Psoas muscle (tissue), 8 donors: ENCODE measurements at regions of chr11 and their contacts with region 1.

Region 1: GRCh38 chr11:102007567-102008437 is 39.4 kb upstream of the CFAP300 start:
- DNase-seq: no peak
- ATAC-seq: peak; percentile 37 to 83 (median 62)
- H3K4me3 ChIP-seq: no peak overlapping the region
- H3K27ac ChIP-seq: no peak overlapping the region
- H3K4me1 ChIP-seq: peaks cover 10% of the 10 kb centered on the region
- H3K27me3 ChIP-seq: no peaks in the 10 kb centered on the region
- CTCF ChIP-seq: peak; percentile 63

Region 2: DNA sequence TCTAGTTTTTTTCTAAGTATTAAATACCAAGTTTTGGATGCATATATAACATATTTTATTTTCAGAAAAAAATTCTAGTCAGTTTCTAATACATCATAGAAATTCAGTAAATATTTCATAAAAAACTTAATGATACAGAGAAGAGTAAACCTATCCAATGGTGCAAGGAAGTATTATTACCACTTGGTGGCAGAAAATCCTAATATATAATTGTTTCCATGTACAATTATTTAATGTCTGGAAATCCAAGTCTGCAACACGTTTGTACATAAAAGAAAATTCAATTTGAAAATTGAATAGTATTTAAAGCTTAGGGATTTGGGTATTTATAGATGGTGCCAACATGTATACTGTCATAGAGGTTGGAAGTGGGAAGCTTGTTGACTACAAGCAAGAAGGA is 551.0 kb before region 1 on chr11:
- intact Hi-C with region 1: loop called in 1 of 2 experiments (anchors 10 kb)
- DNase-seq: no peak
- ATAC-seq: no peak
- H3K4me3 ChIP-seq: no peak overlapping the region
- H3K27ac ChIP-seq: no peak overlapping the region
- H3K4me1 ChIP-seq: no peaks in the 10 kb centered on the region
- H3K27me3 ChIP-seq: no peaks in the 10 kb centered on the region
- CTCF ChIP-seq: peak; percentile 26

Region 3: GRCh38 chr11:101860696-101861427 is 146.9 kb before region 1 on chr11:
- intact Hi-C with region 1: loop called (anchors 2 kb)
- DNase-seq: no peak
- ATAC-seq: peak; percentile 62 to 79 (median 74)
- H3K4me3 ChIP-seq: no peak overlapping the region
- H3K27ac ChIP-seq: no peak overlapping the region
- H3K4me1 ChIP-seq: no peaks in the 10 kb centered on the region
- H3K27me3 ChIP-seq: no peaks in the 10 kb centered on the region
- CTCF ChIP-seq: peak; percentile 70

Region 4: GRCh38 chr11:101914738-101915426 is 92.9 kb before region 1 on chr11 and contains the start of gene CEP126:
- intact Hi-C with region 1: loop called in 1 of 2 experiments (anchors 10 kb)
- DNase-seq: peak; percentile 94 to 96
- ATAC-seq: peak; percentile 94 to 99 (median 98)
- H3K4me3 ChIP-seq: peak within 1 kb of the TSS; percentile 83
- H3K27ac ChIP-seq: peak within 1 kb of the TSS; percentile 67
- H3K4me1 ChIP-seq: peaks cover 10% of the 10 kb centered on the region
- H3K27me3 ChIP-seq: no peaks in the 10 kb centered on the region
- CTCF ChIP-seq: peak; percentile 23
- total RNA-seq, gene CEP126: 0.46 to 1.2 (median 0.52) TPM

Region 5: GRCh38 chr11:102306048-102306585 is 298.3 kb after region 1 on chr11:
- intact Hi-C with region 1: no loop called
- DNase-seq: no peak
- ATAC-seq: no peak
- H3K4me3 ChIP-seq: no peak overlapping the region
- H3K27ac ChIP-seq: no peak overlapping the region
- H3K4me1 ChIP-seq: no peaks in the 10 kb centered on the region
- H3K27me3 ChIP-seq: peaks cover 0 to 3% (median 0%) of the 10 kb centered on the region in 3 donors
- CTCF ChIP-seq: no peak